PC-9 (cell line): ENCODE measurements at regions of chr5 and their contacts with region 1.

Region 1: DNA sequence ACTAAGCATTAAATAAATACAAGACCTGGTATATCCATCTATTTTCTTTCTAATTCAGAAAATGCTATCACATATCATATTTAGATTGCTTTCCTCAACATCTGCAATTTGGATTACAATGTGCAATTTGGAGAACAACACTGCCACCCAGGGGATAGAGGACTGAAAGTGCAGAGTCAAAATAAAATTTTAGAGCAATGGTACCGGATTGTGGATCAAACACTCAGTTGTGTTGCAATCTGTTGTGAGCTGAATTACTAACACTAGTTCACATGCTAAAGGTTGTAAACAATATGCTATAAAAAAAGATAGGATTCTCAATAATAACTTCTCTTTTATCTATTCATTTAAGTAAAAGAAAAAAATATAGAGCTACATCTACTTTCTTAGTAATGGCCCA is 11.9 kb upstream of the SRFBP1 start:
- DNase-seq: peak in 1 of 2 experiments; percentile 19
- H3K4me3 ChIP-seq: no peak overlapping the region
- H3K27ac ChIP-seq: no peak overlapping the region
- H3K4me1 ChIP-seq: no peaks in the 10 kb centered on the region
- H3K27me3 ChIP-seq: no peaks in the 10 kb centered on the region
- CTCF ChIP-seq: peak; percentile 82

Region 2: DNA sequence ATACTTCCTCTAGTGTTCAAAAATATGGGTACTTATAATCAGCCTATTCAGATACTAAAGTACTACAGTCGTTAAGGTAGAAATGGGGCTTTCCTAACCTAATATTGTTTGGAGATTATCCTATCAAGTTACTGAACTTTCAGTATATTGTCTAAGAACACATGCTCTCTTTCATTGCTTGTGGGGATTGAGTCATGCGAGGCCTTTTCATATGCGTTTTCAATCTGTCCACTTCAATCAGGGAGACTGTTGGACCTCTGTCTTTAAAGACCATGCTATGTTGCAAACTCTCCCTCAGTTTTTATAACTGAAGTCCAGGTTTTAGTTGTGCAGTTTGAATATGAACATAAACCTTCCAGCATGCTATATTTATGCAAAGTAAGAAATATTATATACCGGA is 1470.8 kb before region 1 on chr5:
- CTCF ChIA-PET with region 1: no interaction called
- POLR2A ChIA-PET with region 1: no interaction called
- intact Hi-C with region 1: loop called (anchors 10 kb)
- DNase-seq: no peak
- H3K4me3 ChIP-seq: no peak overlapping the region
- H3K27ac ChIP-seq: no peak overlapping the region
- H3K4me1 ChIP-seq: no peaks in the 10 kb centered on the region
- H3K27me3 ChIP-seq: no peaks in the 10 kb centered on the region
- CTCF ChIP-seq: no peak

Region 3: DNA sequence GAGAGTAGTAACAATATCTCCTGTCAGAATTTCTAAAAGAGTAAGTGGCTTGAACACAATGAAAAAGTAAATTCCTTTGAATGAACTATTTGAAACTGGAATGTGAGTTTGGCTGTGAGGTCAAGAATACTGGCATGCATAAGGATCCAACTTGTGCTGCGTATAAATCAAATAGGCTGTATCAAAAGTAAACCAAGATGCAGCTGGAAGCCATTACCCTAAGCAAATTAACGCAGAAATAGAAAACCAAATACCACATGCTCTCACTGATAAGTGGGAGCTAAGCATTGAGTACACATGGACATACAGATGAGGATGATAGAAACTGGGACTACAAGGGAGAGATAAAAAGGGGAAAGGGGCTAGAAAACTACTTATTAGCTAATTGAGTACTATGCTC is 12.1 kb before region 1 on chr5:
- CTCF ChIA-PET with region 1: no interaction called
- POLR2A ChIA-PET with region 1: no interaction called
- intact Hi-C with region 1: no loop called
- DNase-seq: no peak
- H3K4me3 ChIP-seq: no peak overlapping the region
- H3K27ac ChIP-seq: no peak overlapping the region
- H3K4me1 ChIP-seq: no peaks in the 10 kb centered on the region
- H3K27me3 ChIP-seq: no peaks in the 10 kb centered on the region
- CTCF ChIP-seq: no peak